ENCODE measurements at regions of chr19 and their contacts with region 1.

Region 1: GRCh38 chr19:38729653-38730469 is 14.4 kb downstream of the CAPN12 start:
- DNase-seq: peak; percentile 89 to 90
- ATAC-seq: peak; percentile 15 to 71; a peak in 5 of 6 replicates
- H3K4me3 ChIP-seq: no peak overlapping the region
- H3K27ac ChIP-seq: peak overlapping the region; percentile 53 to 84; a peak in 5 of 6 replicates
- H3K4me1 ChIP-seq: peaks cover 84% of the 10 kb centered on the region
- CTCF ChIP-seq: peak; percentile 98
- EP300 ChIP-seq: no peak
- POLR2A ChIP-seq: no peak
- RAD21 ChIP-seq: peak; percentile 81 to 87

Region 2: GRCh38 chr19:38640368-38640767 is 89.5 kb before region 1 on chr19:
- CTCF ChIA-PET with region 1: interaction called, 44 read pairs
- POLR2A ChIA-PET with region 1: no interaction called
- DNase-seq: no peak
- ATAC-seq: 0 out of 6 replicates have a peak, but pooled peaks of 1 of the 2 experiments have one; percentile 9
- H3K4me3 ChIP-seq: no peak overlapping the region
- H3K27ac ChIP-seq: peak overlapping the region in 1 of 2 experiments; percentile 56; a peak in 3 of 6 replicates
- H3K4me1 ChIP-seq: peaks cover 47% of the 10 kb centered on the region
- CTCF ChIP-seq: no peak
- EP300 ChIP-seq: no peak
- POLR2A ChIP-seq: no peak
- RAD21 ChIP-seq: no peak

Region 3: DNA sequence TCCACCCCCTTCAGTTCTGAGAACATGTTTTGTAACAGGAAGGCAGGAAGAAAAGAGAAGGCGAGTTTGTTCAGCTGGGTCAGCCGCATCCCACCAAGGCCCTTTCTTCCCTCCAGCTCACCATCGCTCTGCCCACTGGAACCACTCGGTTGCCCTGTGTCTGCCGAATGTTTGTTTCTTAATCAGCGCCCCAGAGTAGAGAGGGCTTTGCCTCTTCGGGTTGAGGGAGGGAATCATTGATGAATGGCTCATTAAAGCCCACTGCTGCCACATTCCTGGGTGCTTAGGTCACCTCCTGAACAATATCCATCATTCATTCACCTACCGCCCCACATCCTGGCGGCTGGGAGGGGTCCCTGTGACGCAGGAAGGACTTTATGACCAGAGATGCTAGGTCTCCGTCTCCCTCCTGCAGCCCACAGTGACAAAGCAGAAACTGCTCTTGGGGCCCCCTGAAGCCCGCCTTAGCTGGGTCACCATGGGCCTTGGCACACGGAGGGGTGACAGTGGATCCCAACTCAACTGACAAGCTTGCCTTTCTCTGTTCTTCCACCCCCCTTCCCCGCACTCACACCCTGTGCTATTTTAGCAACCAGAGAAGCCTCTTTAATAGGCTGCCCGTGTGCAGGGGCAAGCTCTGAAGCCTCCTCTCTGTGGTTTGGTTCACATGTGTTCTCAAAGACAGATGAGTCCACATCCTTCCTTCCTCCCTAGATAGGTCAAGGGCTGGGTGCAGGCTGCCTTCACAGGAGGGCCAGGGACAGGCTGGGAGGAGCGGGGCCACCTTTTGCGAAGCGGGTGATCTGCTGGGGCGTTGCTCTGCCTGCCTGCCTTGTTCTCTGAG is 36.3 kb before region 1 on chr19:
- CTCF ChIA-PET with region 1: interaction called, 764 read pairs
- POLR2A ChIA-PET with region 1: no interaction called
- DNase-seq: peak; percentile 91 to 92
- ATAC-seq: peak; percentile 10 to 54
- H3K4me3 ChIP-seq: 0 out of 3 replicates have a peak overlapping the region, but pooled peaks have one; percentile 1
- H3K27ac ChIP-seq: peak overlapping the region; percentile 93 to 94
- H3K4me1 ChIP-seq: peaks cover 100% of the 10 kb centered on the region
- CTCF ChIP-seq: no peak
- EP300 ChIP-seq: peak; percentile 55 to 84; a peak in 3 of 5 replicates
- POLR2A ChIP-seq: no peak
- RAD21 ChIP-seq: 0 out of 5 replicates have a peak, but pooled peaks of 1 of the 2 experiments have one; percentile 8

Region 4: GRCh38 chr19:38718747-38719543 is 10.9 kb before region 1 on chr19:
- CTCF ChIA-PET with region 1: interaction called, 764 read pairs
- POLR2A ChIA-PET with region 1: interaction called, 4 read pairs
- DNase-seq: peak in 1 of 2 experiments; percentile 61
- ATAC-seq: peak; percentile 30 to 52
- H3K4me3 ChIP-seq: no peak overlapping the region
- H3K27ac ChIP-seq: peak overlapping the region; percentile 32 to 66; a peak in 4 of 6 replicates
- H3K4me1 ChIP-seq: peaks cover 33% of the 10 kb centered on the region
- CTCF ChIP-seq: peak; percentile 38; the same call in 2 of the 3 replicates
- EP300 ChIP-seq: no peak
- POLR2A ChIP-seq: no peak
- RAD21 ChIP-seq: peak; percentile 20 to 35; a peak in 4 of 5 replicates

Region 5: GRCh38 chr19:38784224-38784623 is 54.4 kb after region 1 on chr19:
- CTCF ChIA-PET with region 1: no interaction called
- POLR2A ChIA-PET with region 1: no interaction called
- DNase-seq: peak; percentile 80 to 81
- ATAC-seq: peak; percentile 61; a peak in 4 of 6 replicates
- H3K4me3 ChIP-seq: no peak overlapping the region
- H3K27ac ChIP-seq: peak overlapping the region; percentile 22 to 59
- H3K4me1 ChIP-seq: peaks cover 19% of the 10 kb centered on the region
- CTCF ChIP-seq: no peak
- EP300 ChIP-seq: no peak
- POLR2A ChIP-seq: no peak
- RAD21 ChIP-seq: no peak

Region 6: GRCh38 chr19:38838573-38839269 is 108.9 kb after region 1 on chr19:
- CTCF ChIA-PET with region 1: interaction called, 12 read pairs
- POLR2A ChIA-PET with region 1: no interaction called
- DNase-seq: peak in 1 of 2 experiments; percentile 62
- ATAC-seq: peak; percentile 6 to 8; a peak in 4 of 6 replicates
- H3K4me3 ChIP-seq: no peak overlapping the region
- H3K27ac ChIP-seq: peak overlapping the region; percentile 36 to 76; a peak in 4 of 6 replicates
- H3K4me1 ChIP-seq: peaks cover 92% of the 10 kb centered on the region
- CTCF ChIP-seq: no peak
- EP300 ChIP-seq: no peak
- POLR2A ChIP-seq: no peak
- RAD21 ChIP-seq: 0 out of 5 replicates have a peak, but pooled peaks of 1 of the 2 experiments have one; percentile 26